ENCODE measurements at regions of chr1 and their contacts with region 1.

Region 1: GRCh38 chr1:203112301-203112874 is 15.1 kb upstream of the ADORA1 start:
- DNase-seq: no peak
- H3K4me3 ChIP-seq: no peak overlapping the region
- H3K27ac ChIP-seq: no peak overlapping the region
- H3K4me1 ChIP-seq: no peaks in the 10 kb centered on the region
- H3K27me3 ChIP-seq: peaks cover 0 to 28% of the 10 kb centered on the region in 2 donors
- CTCF ChIP-seq: no peak

Region 2: DNA sequence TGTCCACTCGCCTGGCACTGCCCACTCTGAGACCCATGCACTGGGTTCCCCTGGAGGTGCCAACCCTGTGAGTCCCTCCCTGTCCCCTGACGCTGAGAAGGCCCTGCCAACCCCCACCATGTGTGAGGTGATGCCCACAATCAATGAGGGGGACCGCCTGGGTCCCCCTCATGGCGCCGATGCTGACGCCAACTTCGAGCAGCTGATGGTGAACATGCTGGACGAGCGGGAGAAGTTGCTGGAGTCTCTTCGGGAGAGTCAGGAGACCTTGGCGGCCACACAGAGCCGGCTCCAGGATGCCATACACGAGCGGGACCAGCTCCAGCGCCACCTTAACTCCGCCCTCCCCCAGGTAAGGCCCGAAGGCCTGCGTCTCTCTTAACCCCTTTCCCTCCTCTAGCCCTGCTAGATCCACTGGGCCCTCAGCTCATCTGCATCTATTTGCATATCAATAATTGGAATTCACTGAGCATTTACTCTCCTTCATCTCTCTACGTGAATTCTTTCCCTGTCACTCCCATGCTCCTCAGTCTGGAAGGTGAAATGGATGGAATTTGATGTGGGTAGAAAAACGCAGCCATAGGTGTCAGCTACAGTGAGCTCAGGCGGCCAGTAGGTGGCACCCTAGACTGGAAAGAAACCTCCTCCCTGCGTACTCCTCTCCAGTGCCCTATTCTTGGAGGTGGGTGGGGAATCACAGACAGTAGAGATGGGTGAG is 73.3 kb before region 1 on chr1:
- intact Hi-C with region 1: loop called (anchors 5 kb)
- DNase-seq: peak; percentile 76 to 79
- H3K4me3 ChIP-seq: no peak overlapping the region
- H3K27ac ChIP-seq: peak overlapping the region; percentile 56 to 76
- H3K4me1 ChIP-seq: peaks cover 0 to 26% (median 17%) of the 10 kb centered on the region in 4 donors
- H3K27me3 ChIP-seq: no peaks in the 10 kb centered on the region
- CTCF ChIP-seq: peak; percentile 91 to 96

Region 3: GRCh38 chr1:203058676-203058935 is 53.8 kb before region 1 on chr1:
- intact Hi-C with region 1: no loop called
- DNase-seq: no peak
- H3K4me3 ChIP-seq: no peak overlapping the region
- H3K27ac ChIP-seq: no peak overlapping the region
- H3K4me1 ChIP-seq: no peaks in the 10 kb centered on the region
- H3K27me3 ChIP-seq: no peaks in the 10 kb centered on the region
- CTCF ChIP-seq: no peak

Region 4: DNA sequence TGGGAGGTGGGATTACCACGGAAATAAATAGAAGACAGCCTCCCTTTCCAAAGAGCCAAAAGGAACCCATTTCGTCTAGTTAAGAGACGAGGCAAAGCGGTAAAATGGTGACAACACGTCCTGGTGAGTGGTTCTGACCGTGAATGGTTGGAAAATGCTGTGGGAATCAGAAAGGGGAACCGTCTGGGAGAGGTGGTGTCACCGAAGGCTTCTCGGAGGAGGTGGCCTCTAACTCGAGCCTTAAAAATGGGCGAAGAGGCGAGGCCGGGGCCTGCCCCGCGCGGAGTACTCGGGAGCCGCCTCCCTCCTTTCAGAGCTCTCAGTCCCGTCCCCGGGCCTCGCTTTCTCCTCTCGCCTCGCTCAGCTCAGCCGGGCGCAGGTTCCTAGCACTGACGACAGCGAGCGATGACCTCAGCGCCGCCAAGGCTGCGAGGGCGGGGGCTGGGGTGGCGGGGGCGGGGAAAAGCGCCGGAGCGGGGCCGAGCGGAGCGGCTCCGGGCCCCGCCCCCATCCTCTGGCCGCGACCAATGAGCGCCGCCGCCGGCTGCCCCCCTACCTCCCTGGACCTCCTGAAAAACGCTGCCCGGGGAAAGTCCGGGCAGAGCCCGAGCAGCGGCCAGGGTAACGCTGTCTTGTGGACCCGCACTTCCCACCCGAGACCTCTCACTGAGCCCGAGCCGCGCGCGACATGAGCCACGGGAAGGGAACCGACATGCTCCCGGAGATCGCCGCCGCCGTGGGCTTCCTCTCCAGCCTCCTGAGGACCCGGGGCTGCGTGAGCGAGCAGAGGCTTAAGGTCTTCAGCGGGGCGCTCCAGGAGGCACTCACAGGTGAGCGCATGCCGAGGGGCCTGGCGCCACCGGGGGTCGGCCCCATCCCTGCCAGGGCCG is 192.8 kb after region 1 on chr1 and contains the start of gene BTG2:
- intact Hi-C with region 1: no loop called
- DNase-seq: peak; percentile 93 to 97
- H3K4me3 ChIP-seq: peak within 1 kb of the TSS; percentile 94 to 100
- H3K27ac ChIP-seq: peak within 1 kb of the TSS; percentile 100
- H3K4me1 ChIP-seq: peaks cover 0 to 42% (median 33%) of the 10 kb centered on the region in 4 donors
- H3K27me3 ChIP-seq: no peaks in the 10 kb centered on the region
- CTCF ChIP-seq: peak in 1 of 2 experiments; percentile 21

Measured in tibial artery (tissue), 4 donors.